Activated CD8-positive, alpha-beta T cell treated with anti-CD3 and anti-CD28 coated beads for 36 hours (primary cell): ENCODE measurements at regions of chr16 and their contacts with region 1.

Region 1: GRCh38 chr16:4746991-4747574 is 12.7 kb downstream of the DNAAF8 start:
- DNase-seq: no peak
- ATAC-seq: peak; percentile 25
- H3K4me3 Mint-ChIP-seq: no peak overlapping the region
- H3K27ac Mint-ChIP-seq: peak overlapping the region; percentile 34
- H3K4me1 Mint-ChIP-seq: peaks cover 26% of the 10 kb centered on the region
- H3K27me3 Mint-ChIP-seq: no peaks in the 10 kb centered on the region
- CTCF ChIP-seq: no peak

Region 2: DNA sequence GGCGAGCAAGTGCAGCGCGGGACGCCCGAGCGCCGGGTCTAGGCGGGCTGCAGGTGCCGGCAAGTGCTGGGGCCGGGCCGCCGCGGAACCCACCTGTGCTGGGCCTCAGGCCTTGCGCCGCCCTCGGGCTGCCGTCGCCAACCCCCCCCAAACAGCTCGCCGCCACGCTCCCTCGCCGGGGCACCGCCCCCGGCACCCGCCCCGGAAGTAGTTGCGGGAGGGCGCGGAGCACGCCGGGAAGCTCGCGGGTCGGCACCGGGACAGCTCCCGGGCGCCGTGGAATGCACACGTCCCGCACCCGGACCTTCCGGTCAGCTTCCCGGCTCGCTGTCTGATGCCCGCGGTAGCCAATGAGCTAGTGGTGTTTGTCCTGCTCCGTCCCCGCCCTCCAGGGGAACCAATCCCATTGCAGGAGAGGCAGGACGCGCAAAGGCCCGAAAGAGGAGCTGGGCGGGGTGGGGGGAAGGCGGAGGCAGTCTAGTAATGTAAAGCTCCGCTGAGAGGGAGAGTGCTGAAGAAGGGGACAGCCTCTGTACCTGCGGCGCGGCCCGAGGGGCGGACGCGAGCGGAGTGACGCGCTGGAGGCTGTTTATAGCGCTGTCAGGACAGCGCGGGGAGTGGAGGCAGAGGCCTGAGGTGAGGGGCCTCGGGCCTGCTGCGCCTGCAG is 12.9 kb before region 1 on chr16 and contains the starts of genes ANKS3 and DNAAF8:
- CTCF ChIA-PET with region 1: no interaction called
- POLR2A ChIA-PET with region 1: interaction called, 10 read pairs
- intact Hi-C with region 1: no loop called
- DNase-seq: peak; percentile 86
- ATAC-seq: peak; percentile 81
- H3K4me3 Mint-ChIP-seq: peak within 1 kb of the TSS; percentile 88
- H3K27ac Mint-ChIP-seq: peak within 1 kb of the TSS; percentile 75
- H3K4me1 Mint-ChIP-seq: peaks cover 16% of the 10 kb centered on the region
- H3K27me3 Mint-ChIP-seq: no peaks in the 10 kb centered on the region
- CTCF ChIP-seq: no peak
- total RNA-seq, gene ANKS3: 13.0 to 13.8 TPM
- total RNA-seq, gene DNAAF8: 0.18 to 0.38 TPM

Region 3: GRCh38 chr16:4766874-4767628 is 20.0 kb after region 1 on chr16 and contains the start of gene ZNF500:
- CTCF ChIA-PET with region 1: no interaction called
- POLR2A ChIA-PET with region 1: interaction called, 11 read pairs
- intact Hi-C with region 1: no loop called
- DNase-seq: peak; percentile 97
- ATAC-seq: peak; percentile 74
- H3K4me3 Mint-ChIP-seq: peak within 1 kb of the TSS; percentile 90
- H3K27ac Mint-ChIP-seq: peak within 1 kb of the TSS; percentile 96
- H3K4me1 Mint-ChIP-seq: peaks cover 30% of the 10 kb centered on the region
- H3K27me3 Mint-ChIP-seq: no peaks in the 10 kb centered on the region
- CTCF ChIP-seq: no peak
- total RNA-seq, gene ZNF500: 10.9 to 12.8 TPM

Region 4: DNA sequence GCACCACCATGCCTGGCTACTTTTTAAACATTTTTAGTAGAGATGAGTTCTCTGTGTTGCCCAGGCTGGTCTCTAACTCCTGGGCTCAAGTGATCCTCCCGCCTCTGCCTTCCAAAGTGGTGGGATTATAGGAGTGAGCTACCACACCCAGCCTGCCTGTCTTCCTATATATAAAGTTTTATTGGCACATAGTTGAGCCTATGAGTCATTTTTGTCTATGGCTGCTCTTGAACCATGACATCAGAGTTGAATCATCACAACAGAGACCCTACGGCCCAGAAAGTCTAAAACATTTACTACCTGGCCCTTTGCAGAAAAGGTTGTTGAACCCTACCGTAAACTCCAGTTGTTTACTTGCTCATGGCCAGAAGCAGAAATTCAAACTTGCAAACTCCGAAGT is 33.2 kb after region 1 on chr16:
- CTCF ChIA-PET with region 1: no interaction called
- POLR2A ChIA-PET with region 1: no interaction called
- intact Hi-C with region 1: no loop called
- DNase-seq: no peak
- ATAC-seq: no peak
- H3K4me3 Mint-ChIP-seq: no peak overlapping the region
- H3K27ac Mint-ChIP-seq: no peak overlapping the region
- H3K4me1 Mint-ChIP-seq: no peaks in the 10 kb centered on the region
- H3K27me3 Mint-ChIP-seq: no peaks in the 10 kb centered on the region
- CTCF ChIP-seq: no peak